ENCODE measurements at regions of chr7 and their contacts with region 1.

Region 1: GRCh38 chr7:47539398-47540052 is 42.4 kb downstream of the TNS3 start:
- DNase-seq: no peak
- H3K4me3 ChIP-seq: no peak overlapping the region
- H3K27ac ChIP-seq: no peak overlapping the region
- H3K4me1 ChIP-seq: peaks cover 43% of the 10 kb centered on the region
- H3K27me3 ChIP-seq: no peaks in the 10 kb centered on the region
- CTCF ChIP-seq: no peak

Region 2: GRCh38 chr7:47268851-47269836 is 270.4 kb before region 1 on chr7:
- intact Hi-C with region 1: no loop called
- DNase-seq: no peak
- H3K4me3 ChIP-seq: no peak overlapping the region
- H3K27ac ChIP-seq: no peak overlapping the region
- H3K4me1 ChIP-seq: peaks cover 17% of the 10 kb centered on the region
- H3K27me3 ChIP-seq: no peaks in the 10 kb centered on the region
- CTCF ChIP-seq: no peak

Region 3: DNA sequence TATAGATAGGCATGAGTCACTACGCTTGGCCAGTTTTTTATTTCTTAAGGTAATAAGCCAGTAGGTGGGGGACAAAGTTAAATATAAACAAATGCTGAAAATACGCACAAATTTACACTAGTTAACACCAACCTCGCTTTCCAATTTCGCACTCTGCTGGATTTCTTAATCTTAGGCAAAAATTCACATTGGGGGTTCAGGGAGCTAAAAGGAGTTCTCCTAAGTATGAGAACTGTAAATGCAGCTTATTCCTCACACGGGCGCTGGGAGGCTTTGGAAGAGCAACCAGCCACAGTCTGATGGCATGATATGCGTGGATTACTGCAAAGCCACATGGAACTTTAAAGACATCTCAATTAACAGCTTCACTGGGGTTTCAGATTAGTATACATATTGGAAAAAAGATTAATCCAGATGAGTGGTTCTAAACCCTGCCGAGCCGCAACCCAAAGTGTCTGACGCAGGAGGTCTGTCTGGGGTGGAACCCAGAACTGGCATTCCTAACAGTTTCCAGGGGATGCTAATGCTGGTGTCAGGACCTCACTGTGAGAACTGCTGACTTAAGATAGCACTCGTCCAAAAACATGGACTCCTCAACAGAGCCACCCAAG is 26.2 kb after region 1 on chr7:
- intact Hi-C with region 1: loop called (anchors 2 kb)
- DNase-seq: no peak
- H3K4me3 ChIP-seq: no peak overlapping the region
- H3K27ac ChIP-seq: no peak overlapping the region
- H3K4me1 ChIP-seq: peaks cover 29% of the 10 kb centered on the region
- H3K27me3 ChIP-seq: no peaks in the 10 kb centered on the region
- CTCF ChIP-seq: no peak

Measured in left ventricle myocardium inferior (tissue), 1 donor.